Activated CD4-positive, alpha-beta T cell treated with anti-CD3 and anti-CD28 coated beads, Interleukin-2, amount 10 ng/mL, durations not matched to agents 24 days and 14 days (primary cell): ENCODE measurements at regions of chr6 and their contacts with region 1.

Region 1: GRCh38 chr6:27479319-27480182 is 6.6 kb upstream of the ZNF184 start:
- DNase-seq: peak; percentile 96
- H3K4me3 Mint-ChIP-seq: no peak overlapping the region
- H3K27ac Mint-ChIP-seq: no peak overlapping the region
- H3K4me1 Mint-ChIP-seq: peaks cover 6% of the 10 kb centered on the region
- H3K27me3 Mint-ChIP-seq: peaks cover 9% of the 10 kb centered on the region

Region 2: DNA sequence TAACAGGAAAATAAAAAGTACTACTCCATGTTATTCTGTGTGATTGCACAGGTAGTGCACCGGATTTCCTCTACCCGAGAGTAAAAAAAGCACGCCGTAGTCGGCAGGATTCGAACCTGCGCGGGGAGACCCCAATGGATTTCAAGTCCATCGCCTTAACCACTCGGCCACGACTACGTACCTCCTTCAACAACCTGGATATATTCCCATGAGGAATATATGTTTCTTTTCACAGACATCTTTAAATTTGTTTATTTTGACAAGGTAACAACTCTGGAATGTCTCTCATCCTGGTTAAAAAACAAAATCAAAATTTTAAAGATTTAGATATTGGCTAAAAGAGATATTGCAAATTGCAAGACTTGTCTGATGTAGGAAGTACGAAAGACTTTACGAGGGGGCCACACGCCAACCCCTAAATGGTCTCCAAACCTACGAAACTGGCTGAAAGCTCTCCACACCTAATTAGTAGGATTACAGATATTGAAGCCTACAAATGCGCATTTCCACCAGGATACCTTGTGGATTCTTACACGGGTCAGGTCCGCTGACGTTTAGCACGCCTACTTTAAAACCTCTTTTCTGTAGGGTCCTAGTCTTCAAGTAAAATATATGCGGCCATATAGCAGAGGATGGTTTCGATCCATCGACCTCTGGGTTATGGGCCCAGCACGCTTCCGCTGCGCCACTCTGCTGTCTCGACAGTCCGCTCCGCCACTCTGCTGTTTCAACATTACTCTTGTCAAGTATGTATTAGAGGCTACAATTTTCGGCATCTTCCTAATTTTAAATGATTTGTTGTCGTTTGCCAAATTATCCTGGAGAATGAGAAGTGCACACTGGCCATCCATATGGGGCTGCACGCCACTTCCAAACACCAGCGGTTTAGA is 1166.8 kb before region 1 on chr6:
- intact Hi-C with region 1: loop called (anchors 2 kb)
- DNase-seq: peak; percentile 94
- H3K4me3 Mint-ChIP-seq: peak overlapping the region; percentile 91
- H3K27ac Mint-ChIP-seq: peak overlapping the region; percentile 81
- H3K4me1 Mint-ChIP-seq: peaks cover 41% of the 10 kb centered on the region
- H3K27me3 Mint-ChIP-seq: peaks cover 2% of the 10 kb centered on the region

Region 3: DNA sequence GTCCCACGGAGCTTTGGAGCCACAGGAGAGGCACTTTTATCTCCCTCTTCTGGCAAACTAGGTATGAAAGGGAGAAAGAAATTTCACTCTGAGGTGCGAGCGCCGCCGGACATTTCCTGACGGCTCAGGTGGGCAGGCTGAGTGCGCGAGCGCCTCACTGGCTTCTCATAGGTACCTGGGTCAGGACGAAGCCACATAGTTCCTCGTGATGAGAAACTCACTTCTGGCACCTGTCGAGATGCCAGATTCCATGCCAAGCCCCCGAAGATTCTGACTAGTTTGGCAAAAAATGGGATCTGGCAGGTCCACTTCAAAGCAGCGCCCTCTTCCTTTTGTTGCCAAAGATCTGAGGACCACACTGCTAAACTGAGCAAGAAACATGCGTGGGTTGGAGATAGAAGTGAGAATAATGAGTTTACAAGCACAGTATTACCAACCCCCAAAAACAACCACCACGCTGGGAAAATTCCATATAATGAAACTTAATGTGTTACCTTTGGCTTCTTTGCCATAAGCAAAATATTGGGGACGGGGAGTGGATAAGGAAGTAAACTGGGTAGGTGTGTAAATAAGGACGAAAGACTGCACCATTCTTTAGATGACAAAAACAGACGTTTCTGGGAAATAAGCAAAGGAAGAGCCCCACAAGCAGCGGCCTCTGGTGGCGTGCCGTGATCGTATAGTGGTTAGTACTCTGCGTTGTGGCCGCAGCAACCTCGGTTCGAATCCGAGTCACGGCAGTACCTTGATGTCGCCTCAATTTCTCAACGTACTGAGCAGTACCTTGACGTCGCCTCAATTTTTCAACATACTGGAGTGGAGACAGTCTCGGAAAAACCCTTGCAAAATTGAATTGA is 321.9 kb before region 1 on chr6:
- intact Hi-C with region 1: loop called (anchors 2 kb)
- DNase-seq: peak; percentile 94
- H3K4me3 Mint-ChIP-seq: peak overlapping the region; percentile 90
- H3K27ac Mint-ChIP-seq: peak overlapping the region; percentile 92
- H3K4me1 Mint-ChIP-seq: peaks cover 45% of the 10 kb centered on the region
- H3K27me3 Mint-ChIP-seq: peaks cover 2% of the 10 kb centered on the region

Region 4: DNA sequence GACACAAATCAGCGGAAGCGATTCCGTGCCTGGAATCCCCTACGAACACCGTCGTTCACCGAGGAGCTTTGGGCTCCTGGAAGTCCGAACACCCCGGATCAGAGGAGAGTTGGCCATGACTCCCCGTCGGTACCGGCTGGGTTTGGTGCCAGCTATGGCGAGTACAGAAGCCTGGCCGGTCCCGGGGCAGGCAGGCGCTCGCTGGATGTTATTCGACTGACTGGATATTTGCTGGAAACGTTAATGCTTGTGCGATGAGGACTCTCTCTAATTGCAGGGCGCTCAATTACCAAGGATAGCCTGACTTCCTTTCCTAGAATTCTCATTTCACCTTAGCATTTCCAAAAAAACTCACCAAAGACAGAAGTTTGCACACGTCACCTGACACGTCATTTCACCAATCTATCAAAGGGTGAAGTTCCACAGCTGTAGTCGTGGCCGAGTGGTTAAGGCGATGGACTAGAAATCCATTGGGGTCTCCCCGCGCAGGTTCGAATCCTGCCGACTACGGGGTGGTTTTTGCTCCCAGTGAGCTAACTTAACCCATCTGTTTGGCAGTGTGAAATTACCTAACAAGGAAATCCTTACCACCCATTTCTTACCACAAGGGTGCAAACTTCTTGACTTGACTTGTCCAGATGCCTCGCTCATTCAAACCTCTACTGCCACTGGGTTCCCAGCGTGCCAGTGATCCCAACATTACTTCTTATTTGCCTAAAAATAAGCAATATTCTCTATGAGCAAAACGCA is 16.0 kb after region 1 on chr6:
- intact Hi-C with region 1: loop called (anchors 1 kb)
- DNase-seq: peak; percentile 84
- H3K4me3 Mint-ChIP-seq: peak overlapping the region; percentile 89
- H3K27ac Mint-ChIP-seq: peak overlapping the region; percentile 72
- H3K4me1 Mint-ChIP-seq: peaks cover 16% of the 10 kb centered on the region
- H3K27me3 Mint-ChIP-seq: peaks cover 59% of the 10 kb centered on the region

Region 5: DNA sequence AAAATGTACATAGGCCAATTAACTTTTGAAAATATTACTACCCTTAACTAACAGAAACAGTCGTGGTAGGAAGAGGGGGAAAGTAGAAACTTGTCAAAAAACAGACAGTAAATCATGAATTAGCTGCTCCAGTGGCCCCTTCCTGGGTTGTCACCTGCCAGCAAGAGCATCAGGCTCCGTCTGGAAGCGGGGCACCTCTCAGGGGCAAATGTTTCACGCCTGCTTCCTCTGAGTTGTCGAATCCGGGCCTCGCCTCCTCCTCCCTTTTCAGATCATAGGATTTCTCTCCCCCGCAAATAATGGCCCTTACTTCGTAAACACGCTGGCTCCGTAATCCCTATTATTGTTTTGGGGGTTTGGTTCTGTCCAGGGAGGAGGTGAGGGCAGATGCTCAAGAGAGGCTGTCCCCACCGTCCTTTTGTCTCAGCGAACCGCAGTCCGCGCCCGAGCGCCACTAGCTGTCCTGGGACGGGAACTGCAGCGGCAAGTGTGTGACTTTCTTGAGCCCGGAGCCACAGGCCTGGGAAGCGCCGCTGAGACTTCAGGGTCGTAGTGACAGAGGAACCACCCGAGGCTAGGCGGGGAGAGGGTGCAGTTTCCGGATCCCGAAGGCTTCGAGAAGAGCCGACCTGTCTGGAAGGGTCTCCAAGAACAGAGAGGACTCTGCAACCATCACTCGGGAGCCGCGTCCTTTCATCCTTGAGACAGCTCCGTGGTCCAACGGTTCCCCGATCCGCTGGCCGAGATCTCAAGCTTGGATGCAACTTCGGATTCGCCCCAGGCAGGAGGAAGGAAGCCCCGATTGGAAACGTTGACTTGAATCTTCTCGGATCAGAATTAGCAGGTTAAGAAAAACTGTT is 207.8 kb after region 1 on chr6:
- intact Hi-C with region 1: loop called (anchors 1 kb)
- DNase-seq: peak; percentile 92
- H3K4me3 Mint-ChIP-seq: peak overlapping the region; percentile 91
- H3K27ac Mint-ChIP-seq: peak overlapping the region; percentile 86
- H3K4me1 Mint-ChIP-seq: peaks cover 18% of the 10 kb centered on the region
- H3K27me3 Mint-ChIP-seq: peaks cover 21% of the 10 kb centered on the region

Region 6: DNA sequence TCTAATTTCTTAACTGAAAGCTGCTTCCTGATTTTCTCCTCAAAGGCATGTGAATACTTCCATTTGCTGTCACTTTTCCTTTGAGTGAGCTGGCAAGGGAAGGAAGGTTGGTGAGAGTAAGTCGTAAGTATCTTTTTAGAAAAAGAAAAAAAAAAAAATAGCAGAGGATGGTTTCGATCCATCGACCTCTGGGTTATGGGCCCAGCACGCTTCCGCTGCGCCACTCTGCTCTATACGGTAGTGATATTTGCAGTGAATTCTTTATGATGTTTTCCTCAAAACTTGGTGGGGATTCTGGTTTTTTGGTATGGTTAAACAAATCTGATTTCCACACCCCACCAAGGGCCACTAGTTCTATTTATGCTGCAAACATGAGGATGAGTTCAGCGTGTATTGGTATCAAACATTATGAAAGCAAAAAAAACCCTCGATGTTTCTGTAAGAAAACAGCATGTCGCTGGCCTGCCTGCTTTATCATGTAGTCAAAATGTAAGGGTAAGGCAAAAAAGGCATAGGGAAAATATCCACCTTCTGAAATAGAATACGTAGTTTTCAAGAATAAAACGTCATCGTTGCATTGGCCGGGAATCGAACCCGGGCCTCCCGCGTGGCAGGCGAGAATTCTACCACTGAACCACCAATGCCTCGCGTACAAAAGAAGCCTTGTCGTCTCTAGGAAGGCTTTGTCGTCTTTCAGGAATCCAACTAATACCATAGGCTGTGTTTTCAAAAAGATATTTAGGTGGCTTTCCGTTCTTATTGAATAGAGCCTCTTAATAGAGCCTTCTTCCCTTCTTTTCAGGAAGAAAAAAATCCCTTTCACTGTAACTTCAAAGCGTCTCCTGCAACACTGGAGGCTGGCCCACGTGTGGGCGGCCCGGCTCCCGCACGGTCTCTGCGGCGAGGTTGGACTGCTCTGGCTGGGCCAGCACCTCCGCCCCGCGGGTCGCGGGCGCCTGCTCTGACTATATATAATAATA is 423.1 kb after region 1 on chr6:
- intact Hi-C with region 1: loop called (anchors 1 kb)
- DNase-seq: peak; percentile 96
- H3K4me3 Mint-ChIP-seq: peak overlapping the region; percentile 85
- H3K27ac Mint-ChIP-seq: peak overlapping the region; percentile 91
- H3K4me1 Mint-ChIP-seq: peaks cover 15% of the 10 kb centered on the region
- H3K27me3 Mint-ChIP-seq: peaks cover 22% of the 10 kb centered on the region

Region 7: GRCh38 chr6:28981833-28982475 is 1502.4 kb after region 1 on chr6:
- intact Hi-C with region 1: loop called (anchors 1 kb)
- DNase-seq: peak; percentile 91
- H3K4me3 Mint-ChIP-seq: peak overlapping the region; percentile 92
- H3K27ac Mint-ChIP-seq: peak overlapping the region; percentile 95
- H3K4me1 Mint-ChIP-seq: peaks cover 56% of the 10 kb centered on the region
- H3K27me3 Mint-ChIP-seq: peaks cover 38% of the 10 kb centered on the region